ENCODE measurements at regions of chr6 and their contacts with region 1.

Region 1: GRCh38 chr6:106360410-106360988 is at the start of gene CRYBG1:
- DNase-seq: peak; percentile 74
- H3K4me3 ChIP-seq: peak within 1 kb of the TSS; percentile 34 to 63 (median 56)
- H3K27ac ChIP-seq: peak within 1 kb of the TSS in 3 of 4 donors; percentile 61 to 65 (median 65)
- H3K4me1 ChIP-seq: peaks cover 0 to 18% (median 13%) of the 10 kb centered on the region in 4 donors
- H3K27me3 ChIP-seq: peaks cover 0 to 42% (median 26%) of the 10 kb centered on the region in 3 donors
- CTCF ChIP-seq: peak; percentile 49 to 86 (median 62)
- EP300 ChIP-seq: no peak
- POLR2A ChIP-seq: no peak
- total RNA-seq, gene CRYBG1: 5.8 to 16.8 (median 6.6) TPM

Region 2: DNA sequence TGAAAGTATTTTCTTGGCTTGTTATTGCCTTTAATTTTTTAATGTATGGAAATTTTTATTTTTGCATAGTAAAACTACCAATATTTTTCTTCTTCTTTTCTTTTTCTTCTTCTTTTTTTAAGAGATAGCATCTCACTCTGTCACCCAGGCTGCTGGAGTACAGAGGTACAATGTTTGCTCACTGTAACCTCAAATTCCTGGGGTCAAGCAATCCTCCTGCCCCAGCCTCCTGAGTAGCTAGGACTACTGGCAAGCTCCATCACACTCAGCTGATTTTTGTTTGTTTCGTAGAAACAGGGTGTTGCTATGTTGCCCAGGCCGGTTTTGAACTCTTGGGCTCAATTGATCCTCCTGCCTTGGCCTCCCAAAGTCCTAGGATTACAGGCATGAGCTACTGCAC is 76.8 kb after region 1 on chr6:
- intact Hi-C with region 1: loop called (anchors 2 kb)
- DNase-seq: no peak
- H3K4me3 ChIP-seq: no peak overlapping the region
- H3K27ac ChIP-seq: no peak overlapping the region
- H3K4me1 ChIP-seq: peaks cover 0 to 8% (median 0%) of the 10 kb centered on the region in 4 donors
- H3K27me3 ChIP-seq: peaks cover 0 to 3% (median 0%) of the 10 kb centered on the region in 3 donors
- CTCF ChIP-seq: no peak
- EP300 ChIP-seq: no peak
- POLR2A ChIP-seq: no peak

Region 3: GRCh38 chr6:106512048-106512967 is 151.8 kb after region 1 on chr6:
- intact Hi-C with region 1: loop called (anchors 5 kb)
- DNase-seq: peak; percentile 82
- H3K4me3 ChIP-seq: peak overlapping the region; percentile 70 to 85 (median 72)
- H3K27ac ChIP-seq: peak overlapping the region; percentile 77 to 83 (median 78)
- H3K4me1 ChIP-seq: peaks cover 0 to 46% (median 33%) of the 10 kb centered on the region in 4 donors
- H3K27me3 ChIP-seq: peaks cover 3 to 60% (median 5%) of the 10 kb centered on the region in 3 donors
- CTCF ChIP-seq: no peak
- EP300 ChIP-seq: no peak
- POLR2A ChIP-seq: peak in 1 of 2 donors; percentile 28

Region 4: DNA sequence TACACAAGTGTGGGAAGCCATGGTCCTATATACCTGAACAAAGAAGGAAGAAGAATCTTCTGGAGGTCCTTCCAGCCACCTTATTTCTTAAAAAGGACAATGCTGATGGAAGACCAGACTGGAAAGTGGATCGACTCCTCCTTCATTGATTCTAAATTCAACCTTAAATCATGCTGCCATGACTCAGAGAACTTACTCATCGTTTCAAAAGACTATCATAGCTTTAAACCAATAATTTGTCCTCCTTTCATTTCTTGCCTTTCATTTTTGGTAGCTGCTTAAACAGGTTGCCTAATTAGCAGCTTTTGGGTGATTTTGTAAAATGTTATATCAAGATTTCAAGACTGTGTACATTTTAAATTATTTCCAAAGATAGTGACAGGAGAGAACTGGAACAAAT is 208.0 kb after region 1 on chr6:
- intact Hi-C with region 1: loop called (anchors 5 kb)
- DNase-seq: no peak
- H3K4me3 ChIP-seq: no peak overlapping the region
- H3K27ac ChIP-seq: no peak overlapping the region
- H3K4me1 ChIP-seq: peaks cover 0 to 25% (median 19%) of the 10 kb centered on the region in 4 donors
- H3K27me3 ChIP-seq: no peaks in the 10 kb centered on the region
- CTCF ChIP-seq: no peak
- EP300 ChIP-seq: no peak
- POLR2A ChIP-seq: no peak

Region 5: GRCh38 chr6:106757267-106757666 is 396.8 kb after region 1 on chr6:
- intact Hi-C with region 1: no loop called
- DNase-seq: no peak
- H3K4me3 ChIP-seq: no peak overlapping the region
- H3K27ac ChIP-seq: no peak overlapping the region
- H3K4me1 ChIP-seq: no peaks in the 10 kb centered on the region
- H3K27me3 ChIP-seq: no peaks in the 10 kb centered on the region
- CTCF ChIP-seq: no peak
- EP300 ChIP-seq: no peak
- POLR2A ChIP-seq: no peak

Measured in sigmoid colon (tissue), 7 donors.